T-cell (primary cell): ENCODE measurements at regions of chr17 and their contacts with region 1.

Region 1: GRCh38 chr17:44102845-44103622 is 20.4 kb downstream of the HDAC5 start:
- DNase-seq: no peak
- ATAC-seq: no peak
- H3K4me3 ChIP-seq: no peak overlapping the region
- H3K4me3 Mint-ChIP-seq: no peak overlapping the region
- H3K27ac ChIP-seq: no peak overlapping the region
- H3K27ac Mint-ChIP-seq: no peak overlapping the region
- H3K4me1 ChIP-seq: peaks cover 0 to 2% of the 10 kb centered on the region in 2 experiments
- H3K4me1 Mint-ChIP-seq: peaks cover 5 to 10% (median 9%) of the 10 kb centered on the region in 3 donors
- H3K27me3 ChIP-seq: no peaks in the 10 kb centered on the region
- H3K27me3 Mint-ChIP-seq: no peaks in the 10 kb centered on the region

Region 2: GRCh38 chr17:44006598-44007345 is 96.3 kb before region 1 on chr17:
- CTCF ChIA-PET with region 1: no interaction called
- POLR2A ChIA-PET with region 1: no interaction called
- DNase-seq: peak; percentile 82 to 98 (median 94)
- ATAC-seq: peak; percentile 84 to 93 (median 85)
- H3K4me3 ChIP-seq: peak overlapping the region; percentile 77 to 93
- H3K4me3 Mint-ChIP-seq: peak overlapping the region; percentile 81 to 90 (median 84)
- H3K27ac ChIP-seq: no peak overlapping the region
- H3K27ac Mint-ChIP-seq: peak overlapping the region; percentile 20 to 72
- H3K4me1 ChIP-seq: peaks cover 20 to 49% of the 10 kb centered on the region in 2 experiments
- H3K4me1 Mint-ChIP-seq: peaks cover 22 to 31% (median 27%) of the 10 kb centered on the region in 3 donors
- H3K27me3 ChIP-seq: peaks cover 0 to 50% of the 10 kb centered on the region in 2 experiments
- H3K27me3 Mint-ChIP-seq: peaks cover 0 to 4% of the 10 kb centered on the region in 2 donors

Region 3: GRCh38 chr17:44086364-44087311 is 16.4 kb before region 1 on chr17:
- CTCF ChIA-PET with region 1: interaction called in 1 of 2 experiments, 3 read pairs
- POLR2A ChIA-PET with region 1: interaction called in 1 of 2 experiments, 12 read pairs
- DNase-seq: peak in 3 of 35 experiments; percentile 13 to 41 (median 38)
- ATAC-seq: peak; percentile 17 to 75 (median 68)
- H3K4me3 ChIP-seq: no peak overlapping the region
- H3K4me3 Mint-ChIP-seq: no peak overlapping the region
- H3K27ac ChIP-seq: no peak overlapping the region
- H3K27ac Mint-ChIP-seq: peak overlapping the region; percentile 22 to 66
- H3K4me1 ChIP-seq: no peaks in the 10 kb centered on the region
- H3K4me1 Mint-ChIP-seq: peaks cover 0 to 13% (median 6%) of the 10 kb centered on the region in 3 donors
- H3K27me3 ChIP-seq: no peaks in the 10 kb centered on the region
- H3K27me3 Mint-ChIP-seq: no peaks in the 10 kb centered on the region